Activated naive CD4-positive, alpha-beta T cell treated with anti-CD3 and anti-CD28 coated beads, Interleukin-2, amount 10 ng/mL, durations not matched to agents 7 days and 5 days (primary cell): ENCODE measurements at regions of chr5 and their contacts with region 1.

Region 1: DNA sequence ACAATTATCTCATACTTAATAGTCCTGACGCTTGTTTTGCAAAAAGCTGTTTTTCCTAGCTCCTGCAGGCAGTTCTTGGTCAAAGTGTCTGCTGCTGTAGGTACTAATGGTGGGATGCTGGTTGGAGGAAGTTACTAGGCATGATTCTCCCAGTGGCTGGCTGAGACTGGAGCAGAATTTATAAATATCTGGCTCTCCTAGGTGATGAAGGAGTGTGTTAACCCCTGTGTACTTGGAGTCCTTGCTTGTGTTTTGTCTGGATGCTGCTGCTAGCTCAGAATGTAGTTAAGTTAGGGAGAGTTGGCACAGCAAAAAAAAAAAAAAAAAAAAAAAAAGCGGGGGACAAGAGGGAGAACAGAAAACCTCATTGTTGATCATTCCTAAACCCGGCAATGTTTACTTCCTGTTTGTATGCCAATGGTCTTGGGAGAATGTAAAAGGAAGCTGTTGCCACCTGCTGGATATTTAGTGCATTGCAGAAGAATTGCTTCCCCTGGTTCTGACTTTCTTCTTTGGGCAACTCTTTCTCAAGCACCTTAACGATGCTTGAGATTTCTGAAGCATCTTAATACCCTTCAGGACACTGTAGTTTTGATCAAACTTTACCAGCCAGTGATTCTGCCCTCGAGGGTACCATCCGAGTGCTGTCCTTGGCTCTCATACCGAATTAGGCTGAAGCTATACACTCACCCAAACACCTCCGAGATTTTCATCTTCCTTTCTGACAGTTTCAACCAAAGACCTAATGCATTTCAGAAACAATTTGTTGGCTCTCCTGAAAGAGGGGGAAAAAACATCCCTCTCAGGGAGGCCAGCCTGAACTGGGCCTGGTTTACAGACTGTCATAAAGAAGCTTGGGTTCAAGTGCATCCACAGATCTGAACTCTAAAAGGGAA is 71.7 kb upstream of the WWC1 start:
- DNase-seq: peak; percentile 62
- H3K4me3 Mint-ChIP-seq: no peak overlapping the region
- H3K27ac Mint-ChIP-seq: no peak overlapping the region
- H3K4me1 Mint-ChIP-seq: peaks cover 6% of the 10 kb centered on the region
- H3K27me3 Mint-ChIP-seq: peaks cover 31% of the 10 kb centered on the region

Region 2: DNA sequence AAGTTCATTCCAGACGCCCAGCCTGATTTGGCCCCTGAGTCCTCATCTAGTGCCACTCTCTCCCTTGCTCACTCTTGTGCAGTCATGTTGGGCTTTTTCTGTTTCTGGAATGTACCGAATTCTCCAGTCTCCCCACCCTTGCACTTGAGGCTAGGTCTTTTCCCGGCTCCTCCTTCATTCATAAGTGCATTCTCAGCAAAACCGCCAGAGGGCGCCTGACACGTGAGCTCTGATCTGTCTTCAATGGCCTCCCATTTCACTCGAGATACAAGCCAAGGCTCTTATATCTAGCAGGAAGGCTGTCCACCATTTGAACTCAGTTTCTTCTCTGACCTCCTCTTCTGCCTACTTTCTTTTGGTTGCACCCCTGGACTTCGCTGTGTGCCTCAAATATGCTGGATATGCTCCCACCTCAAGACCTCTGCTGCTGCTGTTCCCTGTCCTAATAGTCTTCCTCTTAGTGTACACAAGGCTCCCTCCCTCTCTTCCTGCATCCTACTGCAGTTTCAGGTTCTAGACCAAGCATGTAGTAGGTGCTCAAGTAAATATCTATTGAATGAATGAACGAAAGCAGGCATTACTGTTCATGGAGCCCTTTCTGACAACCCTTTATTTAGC is 496.4 kb before region 1 on chr5:
- CTCF ChIA-PET with region 1: interaction called, 17 read pairs
- DNase-seq: peak; percentile 70
- H3K4me3 Mint-ChIP-seq: no peak overlapping the region
- H3K27ac Mint-ChIP-seq: no peak overlapping the region
- H3K4me1 Mint-ChIP-seq: no peaks in the 10 kb centered on the region
- H3K27me3 Mint-ChIP-seq: no peaks in the 10 kb centered on the region

Region 3: DNA sequence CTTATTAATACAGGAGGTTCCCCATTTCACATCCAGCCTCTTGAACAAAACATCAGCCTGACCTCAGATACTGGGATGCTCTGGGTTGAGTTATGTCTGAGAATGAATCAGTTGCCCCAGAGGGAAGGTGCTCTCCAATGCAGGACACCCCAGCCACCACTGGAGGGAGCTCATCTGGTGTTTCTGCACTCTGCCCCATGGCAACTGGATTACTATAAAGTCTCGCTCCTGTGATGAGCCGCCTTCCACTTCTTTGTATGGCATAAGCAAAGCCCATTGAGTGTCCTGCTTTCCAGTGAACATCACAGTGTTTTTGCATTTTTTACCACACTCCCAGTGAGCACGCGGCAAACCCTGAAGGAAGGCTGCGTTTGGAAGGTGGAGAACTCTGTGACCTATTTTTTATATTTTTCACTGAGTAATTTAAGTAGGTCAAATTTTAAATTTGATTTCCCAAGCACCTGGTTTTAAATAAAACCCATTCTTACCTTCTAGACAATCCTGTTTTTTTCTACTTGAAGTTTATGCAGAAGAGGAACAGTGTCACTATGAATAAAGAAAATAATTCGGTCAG is 105.2 kb before region 1 on chr5:
- CTCF ChIA-PET with region 1: interaction called, 30 read pairs
- DNase-seq: peak; percentile 61
- H3K4me3 Mint-ChIP-seq: no peak overlapping the region
- H3K27ac Mint-ChIP-seq: no peak overlapping the region
- H3K4me1 Mint-ChIP-seq: no peaks in the 10 kb centered on the region
- H3K27me3 Mint-ChIP-seq: no peaks in the 10 kb centered on the region